IMR-90 (cell line): ENCODE measurements at regions of chr1 and their contacts with region 1.

Region 1: DNA sequence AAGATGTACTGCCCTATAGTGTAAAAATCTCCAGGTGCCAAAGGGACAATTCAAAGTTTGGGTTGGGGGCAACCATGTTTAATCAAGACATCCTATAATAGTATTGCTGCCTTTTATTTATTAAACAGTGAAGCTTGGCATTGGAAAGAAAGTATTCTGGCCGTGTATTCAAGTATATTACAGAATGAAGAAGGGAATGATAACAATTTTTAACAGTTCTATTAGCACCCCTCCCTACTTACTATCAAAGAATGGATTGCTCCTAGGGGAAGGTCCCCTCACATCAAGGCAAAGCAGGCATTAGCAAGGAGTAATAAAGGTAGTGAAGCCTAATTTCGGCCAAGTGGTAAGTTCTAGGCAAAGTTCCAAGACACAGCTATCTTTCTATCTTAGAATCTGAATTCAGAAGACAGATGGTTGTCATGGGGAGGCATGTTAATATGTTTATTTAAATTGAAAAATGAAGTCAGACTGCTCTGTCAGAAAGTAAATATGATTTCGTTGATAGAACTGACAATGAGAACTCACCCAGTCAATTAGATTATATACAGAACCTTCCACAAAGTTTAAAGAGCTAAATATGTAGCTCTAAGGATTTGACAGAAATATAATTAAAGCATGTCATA is 24.6 kb downstream of the ST7L start:
- DNase-seq: no peak
- ATAC-seq: no peak
- H3K4me3 ChIP-seq: no peak overlapping the region
- H3K27ac ChIP-seq: no peak overlapping the region
- H3K4me1 ChIP-seq: no peaks in the 10 kb centered on the region; the same call in 1 of the 2 replicates
- H3K27me3 ChIP-seq: no peaks in the 10 kb centered on the region
- CTCF ChIP-seq: no peak
- POLR2A ChIP-seq: no peak
- RAD21 ChIP-seq: no peak

Region 2: DNA sequence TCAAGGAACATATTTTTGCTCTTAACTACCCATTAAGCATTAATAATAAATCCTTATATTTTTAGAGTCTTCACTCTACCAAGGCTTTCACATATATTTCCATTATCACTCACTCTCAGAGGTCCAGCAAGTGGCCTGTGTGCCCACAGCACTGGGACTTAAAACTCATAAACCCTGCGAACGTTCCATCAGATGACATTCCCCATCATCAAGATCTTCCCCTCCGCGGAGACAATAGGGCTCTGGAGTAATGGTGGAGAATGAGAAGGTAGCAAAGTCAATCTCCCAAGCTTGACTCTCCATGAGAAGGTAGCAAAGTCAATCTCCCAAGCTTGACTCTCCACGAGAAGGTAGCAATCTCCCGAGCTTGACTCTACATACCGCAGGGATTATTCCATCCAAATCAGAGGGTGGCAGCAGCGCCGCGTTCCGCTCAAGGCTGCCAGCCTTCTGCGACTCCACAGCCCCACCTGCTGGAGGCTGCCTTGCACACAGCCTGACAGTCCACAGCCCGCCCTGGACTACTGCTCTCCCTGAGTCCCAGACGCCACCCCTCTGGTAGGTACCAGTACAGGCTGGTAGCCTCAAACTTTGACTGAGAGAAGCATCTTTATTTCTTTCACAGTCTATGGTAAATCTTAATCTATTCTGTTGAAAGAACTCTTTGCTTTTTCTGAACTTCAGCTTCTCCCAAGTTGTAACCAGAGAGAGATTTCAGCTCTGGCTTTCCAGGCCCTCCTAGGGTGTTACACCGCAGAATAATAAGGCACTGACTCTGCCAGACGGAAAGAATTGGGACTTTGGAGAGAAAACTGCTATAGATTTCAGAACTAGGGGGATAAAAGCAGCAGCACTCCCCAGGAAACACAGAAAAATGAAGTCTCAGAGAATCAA is 224.7 kb before region 1 on chr1:
- CTCF ChIA-PET with region 1: no interaction called
- POLR2A ChIA-PET with region 1: no interaction called
- dilution Hi-C with region 1: no loop called
- in situ Hi-C with region 1: no loop called
- intact Hi-C with region 1: no loop called
- DNase-seq: peak; percentile 75
- ATAC-seq: peak; percentile 100
- H3K4me3 ChIP-seq: no peak overlapping the region
- H3K27ac ChIP-seq: no peak overlapping the region
- H3K4me1 ChIP-seq: no peaks in the 10 kb centered on the region
- H3K27me3 ChIP-seq: peaks cover 34% of the 10 kb centered on the region
- CTCF ChIP-seq: peak; percentile 99
- POLR2A ChIP-seq: no peak
- RAD21 ChIP-seq: peak; percentile 85

Region 3: GRCh38 chr1:112537456-112537855 is 56.9 kb before region 1 on chr1:
- CTCF ChIA-PET with region 1: no interaction called
- POLR2A ChIA-PET with region 1: interaction called, 12 read pairs
- dilution Hi-C with region 1: no loop called
- in situ Hi-C with region 1: no loop called
- intact Hi-C with region 1: no loop called
- DNase-seq: no peak
- ATAC-seq: no peak
- H3K4me3 ChIP-seq: no peak overlapping the region
- H3K27ac ChIP-seq: no peak overlapping the region
- H3K4me1 ChIP-seq: peaks cover 2% of the 10 kb centered on the region; the same call in 1 of the 2 replicates
- H3K27me3 ChIP-seq: no peaks in the 10 kb centered on the region
- CTCF ChIP-seq: no peak
- POLR2A ChIP-seq: no peak
- RAD21 ChIP-seq: no peak